ENCODE measurements at regions of chr2 and their contacts with region 1.

Region 1: DNA sequence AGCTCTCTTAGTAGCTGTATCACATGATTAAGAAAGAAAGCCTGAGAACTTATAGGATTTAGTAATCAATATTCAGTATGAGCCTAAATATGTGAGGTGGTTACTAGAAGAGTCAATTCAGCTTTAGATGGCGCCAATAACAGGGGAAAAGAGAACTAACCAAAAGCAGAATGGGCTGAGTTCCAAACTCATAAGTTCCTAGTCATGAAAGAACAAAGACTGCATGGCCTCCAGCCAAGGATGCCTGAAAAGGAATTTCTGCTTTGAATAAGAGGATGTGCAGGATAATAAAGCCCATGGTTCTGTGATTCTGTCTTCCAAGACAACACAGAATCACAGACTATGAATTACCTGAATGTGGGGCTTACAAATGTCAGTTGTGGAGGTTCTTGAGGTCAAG is 196.5 kb downstream of the SATB2 start:
- DNase-seq: peak; percentile 77
- H3K4me3 ChIP-seq: no peak overlapping the region
- H3K27ac ChIP-seq: no peak overlapping the region
- H3K4me1 ChIP-seq: no peaks in the 10 kb centered on the region
- H3K27me3 ChIP-seq: no peaks in the 10 kb centered on the region
- CTCF ChIP-seq: peak in 1 of 2 donors; percentile 34

Region 2: GRCh38 chr2:198374375-198375082 is 886.7 kb before region 1 on chr2:
- CTCF ChIA-PET with region 1: no interaction called
- dilution Hi-C with region 1: no loop called
- in situ Hi-C with region 1: no loop called
- intact Hi-C with region 1: loop called (anchors 2 kb)
- DNase-seq: peak; percentile 42
- H3K4me3 ChIP-seq: no peak overlapping the region
- H3K27ac ChIP-seq: no peak overlapping the region
- H3K4me1 ChIP-seq: peaks cover 3% of the 10 kb centered on the region
- H3K27me3 ChIP-seq: no peaks in the 10 kb centered on the region
- CTCF ChIP-seq: peak; percentile 92 to 96

Region 3: DNA sequence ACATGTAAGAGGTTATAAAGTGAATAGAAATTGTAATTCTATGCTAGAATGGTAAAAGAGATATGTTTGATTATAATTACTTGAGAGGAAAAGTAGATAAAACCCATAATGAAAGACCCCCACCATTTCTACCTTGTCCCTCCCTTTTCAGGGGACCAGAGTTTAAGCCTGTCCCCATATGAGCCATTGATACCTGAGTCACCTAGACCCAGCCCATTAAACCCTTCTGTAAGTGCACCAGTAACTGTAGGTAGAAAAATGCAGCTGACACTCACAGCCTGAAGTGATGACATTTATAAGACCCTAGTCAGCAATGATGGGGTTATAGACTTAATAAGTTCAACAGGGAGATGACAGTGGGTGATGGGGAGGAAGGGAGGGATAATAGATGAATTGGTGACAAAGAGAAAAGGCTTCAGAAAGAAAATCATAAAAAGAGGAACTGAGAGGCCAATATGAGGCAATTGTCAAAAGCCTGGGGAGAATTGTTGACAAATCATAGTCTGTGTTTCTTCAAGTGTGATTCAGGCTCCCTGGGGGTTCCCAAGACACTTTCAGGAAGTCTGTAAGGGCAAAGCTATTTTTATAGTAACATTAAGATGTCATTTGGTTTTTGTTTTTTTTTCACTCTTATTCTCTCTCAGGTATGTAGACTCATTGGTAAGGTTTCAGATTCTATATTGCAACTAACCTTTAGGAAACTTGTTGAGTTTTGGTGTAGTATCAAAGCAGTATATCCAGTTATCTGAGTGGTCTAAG is 347.7 kb before region 1 on chr2:
- CTCF ChIA-PET with region 1: no interaction called
- dilution Hi-C with region 1: no loop called
- in situ Hi-C with region 1: no loop called
- intact Hi-C with region 1: loop called (anchors 10 kb)
- DNase-seq: peak; percentile 3
- H3K4me3 ChIP-seq: no peak overlapping the region
- H3K27ac ChIP-seq: no peak overlapping the region
- H3K4me1 ChIP-seq: peaks cover 8% of the 10 kb centered on the region
- H3K27me3 ChIP-seq: no peaks in the 10 kb centered on the region
- CTCF ChIP-seq: no peak

Region 4: GRCh38 chr2:199459286-199460016 is 198.2 kb after region 1 on chr2:
- CTCF ChIA-PET with region 1: no interaction called
- dilution Hi-C with region 1: no loop called
- in situ Hi-C with region 1: no loop called
- intact Hi-C with region 1: loop called (anchors 1 kb)
- DNase-seq: peak; percentile 93
- H3K4me3 ChIP-seq: peak overlapping the region; percentile 62 to 87 (median 78)
- H3K27ac ChIP-seq: peak overlapping the region; percentile 24
- H3K4me1 ChIP-seq: peaks cover 32% of the 10 kb centered on the region
- H3K27me3 ChIP-seq: peaks cover 44% of the 10 kb centered on the region
- CTCF ChIP-seq: no peak

Measured in mammary epithelial cell (primary cell).